ENCODE measurements at regions of chr9 and their contacts with region 1.

Region 1: DNA sequence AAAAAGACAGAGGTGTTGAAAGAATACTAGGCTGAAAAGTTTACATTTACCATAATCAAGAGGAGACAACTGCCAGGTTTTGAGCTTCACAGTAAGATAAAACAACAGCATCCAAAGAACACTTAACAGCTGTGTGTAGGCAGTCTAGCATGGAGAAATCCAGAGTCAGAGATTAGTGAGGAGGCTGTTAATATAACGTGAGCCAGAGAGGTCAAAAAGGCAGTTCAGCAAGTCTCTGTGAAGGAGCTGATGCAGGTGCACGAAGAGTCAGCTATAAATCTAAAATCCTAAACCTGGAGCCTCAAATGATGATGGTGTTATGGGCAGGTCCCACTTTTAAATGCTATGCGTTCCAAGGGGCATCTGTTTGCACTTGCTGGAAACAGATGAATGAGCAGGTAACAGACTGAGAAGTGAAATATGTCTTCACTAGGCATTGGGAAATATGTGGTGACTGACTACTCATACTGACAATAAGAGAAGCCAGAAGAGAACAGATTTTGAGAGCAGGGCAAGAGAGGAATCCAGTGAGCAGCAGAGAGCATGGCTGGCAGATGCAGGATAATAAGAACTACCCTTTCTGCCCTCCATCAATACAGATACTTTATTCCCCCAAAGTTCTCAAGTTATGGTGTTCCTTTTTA is 8.7 kb downstream of the APTX start:
- DNase-seq: no peak

Region 2: DNA sequence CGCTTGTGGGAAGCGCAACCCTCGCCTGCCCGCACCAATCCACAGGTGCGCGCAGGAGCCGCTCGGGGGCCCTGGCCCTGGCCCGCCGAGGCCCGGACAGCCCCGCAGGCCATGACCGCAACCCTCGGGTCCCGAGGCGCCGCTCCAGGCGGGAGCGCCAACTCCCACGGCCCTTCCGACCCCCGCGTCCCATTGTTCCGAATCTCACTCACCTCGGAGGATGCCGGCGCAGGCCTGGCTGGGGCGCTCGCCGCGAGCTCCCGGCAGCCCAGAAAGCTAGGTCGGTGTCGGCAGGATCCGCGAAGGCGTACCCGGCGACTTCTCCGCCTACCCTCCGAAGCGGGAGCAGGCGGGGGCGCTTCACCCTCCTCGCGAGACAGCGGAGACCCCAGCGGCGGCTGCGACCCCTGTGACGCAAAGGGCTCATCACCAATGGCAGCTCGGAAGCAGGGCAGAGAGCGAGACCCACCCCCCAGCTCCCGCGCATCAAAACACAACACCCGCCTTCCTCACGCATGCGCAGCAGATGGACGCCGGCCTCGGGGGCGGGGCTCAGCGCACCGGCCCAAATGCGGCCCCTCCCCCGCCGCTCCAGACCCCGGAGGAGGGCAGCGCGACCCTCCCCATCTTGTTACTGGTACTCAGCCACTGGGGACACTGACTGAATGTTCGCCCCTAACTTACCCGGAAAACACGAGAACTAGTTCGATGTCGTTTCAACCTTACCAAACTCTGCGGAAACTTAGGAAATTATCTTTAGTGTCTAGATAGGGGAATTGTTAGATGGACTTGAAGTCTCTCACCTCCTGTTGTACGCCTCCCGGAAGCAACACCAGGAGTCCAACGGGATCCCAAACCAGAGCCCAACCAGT is 441.9 kb before region 1 on chr9:
- in situ Hi-C with region 1: loop called (anchors 25 kb)
- DNase-seq: peak; percentile 90